ENCODE measurements at regions of chr1 and their contacts with region 1.

Region 1: DNA sequence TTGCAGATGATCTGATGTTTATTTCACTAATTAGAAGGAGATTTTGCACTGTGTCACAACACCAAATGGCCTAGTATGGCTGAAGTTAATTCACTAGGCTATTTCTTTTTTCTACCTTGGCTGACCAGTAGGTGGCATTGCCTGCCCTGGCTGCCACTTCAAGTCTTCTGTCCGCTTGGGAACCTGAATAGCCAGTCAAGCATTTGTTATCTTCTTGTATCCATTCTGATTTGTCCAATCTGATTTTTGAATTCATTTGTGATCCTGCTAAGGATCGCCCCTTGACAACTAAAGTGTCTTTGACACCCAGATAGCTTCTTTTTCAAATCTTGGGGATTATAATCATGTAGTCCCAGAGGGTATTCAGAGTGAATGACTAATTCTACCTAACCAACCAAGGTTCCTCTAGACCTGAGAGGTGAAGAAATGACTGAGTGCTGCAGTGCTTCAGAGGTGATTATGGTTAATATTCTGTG is 99.4 kb downstream of the GIPC2 start:
- DNase-seq: no peak
- H3K4me3 ChIP-seq: no peak overlapping the region
- H3K4me3 Mint-ChIP-seq: peak overlapping the region in 1 of 7 donors; percentile 16
- H3K27ac ChIP-seq: no peak overlapping the region
- H3K27ac Mint-ChIP-seq: no peak overlapping the region
- H3K4me1 ChIP-seq: peaks cover 6% of the 10 kb centered on the region
- H3K4me1 Mint-ChIP-seq: peaks cover 8 to 18% (median 15%) of the 10 kb centered on the region in 3 donors
- H3K27me3 ChIP-seq: no peaks in the 10 kb centered on the region
- H3K27me3 Mint-ChIP-seq: peaks cover 0 to 34% of the 10 kb centered on the region in 2 donors

Region 2: GRCh38 chr1:78132174-78132947 is 12.8 kb before region 1 on chr1:
- CTCF ChIA-PET with region 1: interaction called, 33 read pairs
- POLR2A ChIA-PET with region 1: no interaction called
- DNase-seq: no peak
- H3K4me3 ChIP-seq: no peak overlapping the region
- H3K4me3 Mint-ChIP-seq: no peak overlapping the region
- H3K27ac ChIP-seq: no peak overlapping the region
- H3K27ac Mint-ChIP-seq: no peak overlapping the region
- H3K4me1 ChIP-seq: no peaks in the 10 kb centered on the region
- H3K4me1 Mint-ChIP-seq: no peaks in the 10 kb centered on the region
- H3K27me3 ChIP-seq: no peaks in the 10 kb centered on the region
- H3K27me3 Mint-ChIP-seq: no peaks in the 10 kb centered on the region

Measured in CD8-positive, alpha-beta memory T cell (primary cell).